Caco-2 (cell line): ENCODE measurements at regions of chr4 and their contacts with region 1.

Region 1: GRCh38 chr4:12852338-12853307 is 631.5 kb downstream of the RAB28 start:
- DNase-seq: peak in 1 of 2 experiments; percentile 43
- H3K4me3 ChIP-seq: no peak overlapping the region
- H3K4me3 Mint-ChIP-seq: no peak overlapping the region
- H3K27ac Mint-ChIP-seq: no peak overlapping the region
- H3K4me1 ChIP-seq: no peaks in the 10 kb centered on the region
- H3K4me1 Mint-ChIP-seq: no peaks in the 10 kb centered on the region
- H3K27me3 ChIP-seq: no peaks in the 10 kb centered on the region
- H3K27me3 Mint-ChIP-seq: peaks cover 4% of the 10 kb centered on the region
- CTCF ChIP-seq: peak; percentile 29 to 58

Region 2: DNA sequence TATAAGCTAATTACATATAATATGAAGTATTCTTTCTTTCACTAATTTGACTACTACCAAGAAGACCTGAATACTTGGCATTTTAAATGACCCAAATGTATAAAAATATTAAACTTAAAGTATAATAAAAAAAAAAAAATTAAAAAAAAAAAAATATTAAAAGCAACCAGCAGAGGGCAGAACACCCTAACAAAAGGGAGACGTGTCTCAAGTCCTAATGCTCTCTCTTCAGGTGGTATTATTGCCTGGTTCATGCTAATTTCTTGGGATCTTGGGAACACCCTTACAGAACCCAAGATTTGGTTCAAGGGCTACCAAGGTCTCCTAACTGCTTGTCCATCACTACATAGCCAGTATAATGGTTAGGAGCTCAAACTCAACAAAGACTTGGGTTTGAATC is 123.2 kb before region 1 on chr4:
- CTCF ChIA-PET with region 1: no interaction called
- POLR2A ChIA-PET with region 1: no interaction called
- intact Hi-C with region 1: loop called (anchors 5 kb)
- DNase-seq: no peak
- H3K4me3 ChIP-seq: no peak overlapping the region
- H3K4me3 Mint-ChIP-seq: no peak overlapping the region
- H3K27ac Mint-ChIP-seq: no peak overlapping the region
- H3K4me1 ChIP-seq: 0 out of 2 replicates have a peak, but pooled peaks cover 2% of the 10 kb centered on the region
- H3K4me1 Mint-ChIP-seq: no peaks in the 10 kb centered on the region
- H3K27me3 ChIP-seq: no peaks in the 10 kb centered on the region
- H3K27me3 Mint-ChIP-seq: peaks cover 16% of the 10 kb centered on the region
- CTCF ChIP-seq: peak in 1 of 2 experiments; percentile 24

Region 3: DNA sequence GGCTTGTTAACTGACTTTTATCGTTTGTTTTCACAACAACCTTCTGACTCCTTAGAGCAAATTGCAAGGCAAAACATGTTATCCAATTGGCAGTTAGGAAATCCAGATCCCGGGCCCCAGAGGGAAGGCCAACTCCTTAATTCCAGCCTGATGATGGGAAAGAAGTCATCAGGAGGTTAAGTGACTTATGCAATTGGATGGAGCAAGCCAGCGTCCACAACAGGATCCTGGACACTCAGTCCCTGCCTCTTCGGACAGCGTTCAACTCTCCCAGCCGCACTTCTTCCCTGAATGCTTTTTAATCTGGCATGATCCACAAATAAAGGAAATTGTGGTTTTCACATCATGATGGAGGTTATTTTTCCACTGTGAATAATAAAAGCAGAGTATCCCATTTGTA is 321.4 kb after region 1 on chr4:
- CTCF ChIA-PET with region 1: no interaction called
- POLR2A ChIA-PET with region 1: no interaction called
- intact Hi-C with region 1: loop called (anchors 5 kb)
- DNase-seq: no peak
- H3K4me3 ChIP-seq: no peak overlapping the region
- H3K4me3 Mint-ChIP-seq: no peak overlapping the region
- H3K27ac Mint-ChIP-seq: no peak overlapping the region
- H3K4me1 ChIP-seq: no peaks in the 10 kb centered on the region
- H3K4me1 Mint-ChIP-seq: no peaks in the 10 kb centered on the region
- H3K27me3 ChIP-seq: no peaks in the 10 kb centered on the region
- H3K27me3 Mint-ChIP-seq: no peaks in the 10 kb centered on the region
- CTCF ChIP-seq: no peak

Region 4: DNA sequence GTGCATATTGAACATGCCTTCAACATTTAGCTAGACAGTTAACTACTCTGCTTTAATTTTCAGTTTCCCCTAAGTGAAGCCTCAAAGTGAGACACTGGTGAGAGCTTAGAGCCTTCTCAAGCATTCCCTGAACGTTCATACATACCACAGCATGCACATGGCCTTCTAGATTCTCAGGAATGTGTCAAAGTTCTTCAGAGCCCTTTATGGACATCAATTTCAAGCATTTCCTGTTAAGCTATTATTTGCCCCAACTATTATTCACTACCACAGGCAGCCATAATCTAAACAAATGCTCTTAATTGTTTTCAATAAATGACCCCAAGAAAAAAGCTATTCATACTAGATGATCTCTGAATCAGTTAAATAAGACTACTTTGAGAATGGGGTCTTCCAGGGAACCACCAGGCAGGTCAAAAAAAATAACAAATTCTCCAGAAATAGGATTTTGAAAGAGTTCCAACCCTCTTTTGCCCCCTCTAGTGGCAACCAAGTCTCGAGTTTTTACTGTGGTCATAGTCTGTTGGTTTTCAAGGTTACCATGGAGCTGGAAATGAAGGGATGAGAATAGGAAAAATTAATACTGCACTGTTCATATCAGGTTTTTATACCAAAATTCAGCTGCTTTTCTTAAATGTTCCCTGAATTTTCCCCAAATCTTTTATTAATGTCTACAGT is 396.1 kb after region 1 on chr4:
- CTCF ChIA-PET with region 1: interaction called, 3 read pairs
- POLR2A ChIA-PET with region 1: no interaction called
- intact Hi-C with region 1: loop called (anchors 1 kb)
- DNase-seq: peak in 1 of 2 experiments; percentile 4
- H3K4me3 ChIP-seq: no peak overlapping the region
- H3K4me3 Mint-ChIP-seq: no peak overlapping the region
- H3K27ac Mint-ChIP-seq: no peak overlapping the region
- H3K4me1 ChIP-seq: no peaks in the 10 kb centered on the region
- H3K4me1 Mint-ChIP-seq: no peaks in the 10 kb centered on the region
- H3K27me3 ChIP-seq: no peaks in the 10 kb centered on the region
- H3K27me3 Mint-ChIP-seq: no peaks in the 10 kb centered on the region
- CTCF ChIP-seq: peak; percentile 26 to 37

Region 5: GRCh38 chr4:13484122-13484748 is 631.6 kb after region 1 on chr4 and contains the start of gene RAB28:
- CTCF ChIA-PET with region 1: no interaction called
- POLR2A ChIA-PET with region 1: no interaction called
- intact Hi-C with region 1: loop called (anchors 2 kb)
- DNase-seq: peak; percentile 88 to 93
- H3K4me3 ChIP-seq: peak within 1 kb of the TSS; percentile 95
- H3K4me3 Mint-ChIP-seq: peak within 1 kb of the TSS; percentile 93
- H3K27ac Mint-ChIP-seq: peak within 1 kb of the TSS; percentile 98
- H3K4me1 ChIP-seq: no peaks in the 10 kb centered on the region
- H3K4me1 Mint-ChIP-seq: peaks cover 11% of the 10 kb centered on the region
- H3K27me3 ChIP-seq: no peaks in the 10 kb centered on the region
- H3K27me3 Mint-ChIP-seq: peaks cover 7% of the 10 kb centered on the region
- CTCF ChIP-seq: no peak
- total RNA-seq, gene RAB28: 12.7 and 14.5 TPM in 2 replicates